Activated CD4-positive, alpha-beta memory T cell treated with anti-CD3 and anti-CD28 coated beads, Interleukin-2, amount 10 ng/mL, durations not matched to agents 7 days and 5 days (primary cell): ENCODE measurements at regions of chr17 and their contacts with region 1.

Region 1: DNA sequence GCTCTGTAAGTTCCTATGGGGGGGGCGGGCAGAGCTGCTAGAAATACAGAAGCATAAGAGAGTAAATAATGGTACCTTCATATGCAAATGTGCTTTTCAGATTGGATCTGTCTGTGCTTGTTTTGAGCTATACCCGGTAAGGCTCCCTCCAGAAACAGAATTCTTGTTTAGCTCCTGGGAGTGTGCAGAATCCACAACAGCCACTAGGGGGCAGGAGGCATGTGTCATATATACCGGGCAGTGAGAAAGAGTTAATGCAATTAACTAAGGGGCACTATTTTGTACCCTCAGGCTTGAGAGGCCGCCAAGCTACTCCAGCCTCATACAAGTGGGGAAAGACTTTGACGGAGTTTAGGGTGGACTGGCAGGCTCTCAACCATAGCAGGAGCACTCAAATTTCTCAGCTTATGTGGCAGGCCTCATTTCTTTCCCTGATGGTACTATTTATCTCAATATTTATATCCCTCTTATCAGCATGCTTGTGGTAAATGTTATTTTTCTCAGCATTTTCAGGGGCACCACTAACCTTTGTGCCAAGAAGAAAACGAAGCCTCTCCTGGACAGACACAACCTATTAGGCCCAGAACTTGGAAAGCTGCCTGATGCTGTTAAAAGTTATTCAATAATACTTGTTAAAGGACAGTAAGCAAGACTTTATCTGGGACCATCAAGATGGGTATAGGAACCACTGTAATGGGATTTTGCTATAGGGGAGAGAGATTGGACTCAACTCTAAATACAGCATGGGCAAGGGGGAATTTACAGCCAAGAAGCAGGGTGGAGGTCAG is 10.7 kb upstream of the CENPV start:
- DNase-seq: peak; percentile 79
- H3K4me3 Mint-ChIP-seq: no peak overlapping the region
- H3K27ac Mint-ChIP-seq: no peak overlapping the region
- H3K4me1 Mint-ChIP-seq: peaks cover 7% of the 10 kb centered on the region
- H3K27me3 Mint-ChIP-seq: peaks cover 5% of the 10 kb centered on the region

Region 2: DNA sequence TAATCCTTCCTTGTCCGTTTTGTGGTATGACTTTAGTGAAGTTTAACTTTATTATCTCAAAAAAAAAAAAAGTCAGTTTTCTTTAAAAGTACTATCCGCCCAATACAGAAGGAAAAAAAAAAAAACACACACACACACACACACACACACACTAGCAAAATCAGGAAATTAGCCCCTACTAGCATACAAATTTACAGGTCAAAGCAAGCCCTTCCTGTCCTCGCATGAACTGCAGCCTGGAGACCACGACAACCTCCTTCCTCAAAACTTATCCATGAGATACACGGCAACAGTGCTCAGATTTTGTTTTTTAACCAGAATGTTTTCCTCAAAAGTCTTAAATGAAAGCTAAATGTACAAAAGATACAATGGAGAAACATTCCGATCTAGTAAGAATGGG is 164.8 kb before region 1 on chr17:
- CTCF ChIA-PET with region 1: no interaction called
- POLR2A ChIA-PET with region 1: no interaction called
- DNase-seq: no peak
- H3K4me3 Mint-ChIP-seq: no peak overlapping the region
- H3K27ac Mint-ChIP-seq: no peak overlapping the region
- H3K4me1 Mint-ChIP-seq: peaks cover 38% of the 10 kb centered on the region
- H3K27me3 Mint-ChIP-seq: no peaks in the 10 kb centered on the region

Region 3: GRCh38 chr17:16342979-16343378 is 21.0 kb before region 1 on chr17:
- CTCF ChIA-PET with region 1: interaction called, 12 read pairs
- POLR2A ChIA-PET with region 1: no interaction called
- DNase-seq: no peak
- H3K4me3 Mint-ChIP-seq: no peak overlapping the region
- H3K27ac Mint-ChIP-seq: no peak overlapping the region
- H3K4me1 Mint-ChIP-seq: no peaks in the 10 kb centered on the region
- H3K27me3 Mint-ChIP-seq: no peaks in the 10 kb centered on the region

Region 4: GRCh38 chr17:16380640-16381495 is 16.9 kb after region 1 on chr17 and contains the start of gene UBB:
- CTCF ChIA-PET with region 1: interaction called, 25 read pairs
- POLR2A ChIA-PET with region 1: interaction called, 19 read pairs
- DNase-seq: peak; percentile 96
- H3K4me3 Mint-ChIP-seq: peak within 1 kb of the TSS; percentile 88
- H3K27ac Mint-ChIP-seq: peak within 1 kb of the TSS; percentile 87
- H3K4me1 Mint-ChIP-seq: peaks cover 34% of the 10 kb centered on the region
- H3K27me3 Mint-ChIP-seq: peaks cover 2% of the 10 kb centered on the region
- total RNA-seq, gene UBB: 1,185 TPM

Region 5: DNA sequence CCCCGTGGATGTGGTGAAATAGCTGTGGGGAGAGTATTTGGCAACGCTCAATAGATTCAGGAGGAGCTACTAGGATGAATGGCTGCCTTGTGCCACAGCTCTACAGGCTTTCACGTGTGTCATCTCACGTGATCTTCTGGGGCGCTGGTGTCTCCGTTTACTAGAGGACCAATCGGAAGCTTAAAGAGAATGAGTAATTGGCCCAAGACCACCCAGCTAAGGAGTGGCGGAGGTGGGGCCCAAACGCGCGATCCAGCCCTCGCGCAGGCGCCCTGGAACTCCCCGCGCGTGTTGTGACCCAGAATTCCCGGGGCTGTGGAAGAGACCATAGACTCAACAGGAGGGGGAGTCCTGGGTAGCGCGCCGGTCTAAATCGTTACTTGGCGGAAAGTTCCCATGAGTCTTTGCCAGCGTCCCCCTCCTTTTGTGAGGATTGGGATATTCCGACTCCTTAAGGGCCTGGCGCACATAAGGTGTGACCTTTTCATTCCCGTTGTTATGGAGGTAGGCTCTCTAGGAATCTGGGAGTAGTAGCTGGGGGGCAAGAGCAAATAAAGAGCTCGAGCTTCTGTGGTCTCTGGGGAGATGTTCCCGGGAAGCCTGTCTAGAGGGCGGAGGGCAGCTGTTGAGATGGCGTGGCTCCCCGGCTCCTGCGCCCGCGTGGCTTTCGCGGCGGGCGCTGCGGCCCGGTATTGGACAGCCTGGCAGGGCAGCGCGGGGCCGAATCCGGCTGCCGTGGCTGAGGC is 74.8 kb after region 1 on chr17:
- CTCF ChIA-PET with region 1: interaction called, 11 read pairs
- POLR2A ChIA-PET with region 1: interaction called, 3 read pairs
- DNase-seq: peak; percentile 95
- H3K4me3 Mint-ChIP-seq: peak overlapping the region; percentile 98
- H3K27ac Mint-ChIP-seq: peak overlapping the region; percentile 97
- H3K4me1 Mint-ChIP-seq: peaks cover 47% of the 10 kb centered on the region
- H3K27me3 Mint-ChIP-seq: no peaks in the 10 kb centered on the region

Region 6: DNA sequence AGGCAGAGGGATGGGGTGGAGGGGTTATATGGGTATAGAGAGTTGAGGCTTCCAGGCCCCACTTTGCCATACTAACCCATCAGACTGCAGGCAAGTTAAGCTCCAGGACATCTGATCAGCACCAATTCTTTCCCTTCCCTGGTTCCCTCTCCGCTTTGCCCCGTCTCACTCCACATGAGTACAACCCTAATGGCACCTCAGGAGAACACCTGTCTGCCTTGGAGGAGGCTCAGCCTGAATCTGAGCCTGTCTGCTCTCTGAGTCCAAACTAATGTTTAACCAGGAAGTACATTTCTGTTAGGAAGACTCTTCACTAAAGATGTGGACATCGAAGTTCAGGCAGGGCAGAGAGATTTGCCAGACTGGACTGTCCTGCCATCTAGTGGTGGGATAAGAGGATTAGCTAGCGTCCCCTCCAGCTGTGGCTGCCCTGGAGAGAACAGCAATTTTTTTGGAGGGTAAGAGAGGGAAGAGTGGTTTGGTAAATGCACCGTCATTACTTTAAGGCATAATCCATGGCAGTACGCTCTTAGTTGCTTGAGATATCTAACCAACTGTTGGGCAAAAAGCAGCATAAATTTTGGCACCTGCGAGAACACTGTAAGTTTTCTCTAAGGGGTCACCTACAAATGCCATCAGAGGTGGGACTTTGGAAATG is 157.3 kb after region 1 on chr17:
- CTCF ChIA-PET with region 1: interaction called, 63 read pairs
- POLR2A ChIA-PET with region 1: no interaction called
- DNase-seq: peak; percentile 69
- H3K4me3 Mint-ChIP-seq: no peak overlapping the region
- H3K27ac Mint-ChIP-seq: no peak overlapping the region
- H3K4me1 Mint-ChIP-seq: peaks cover 4% of the 10 kb centered on the region
- H3K27me3 Mint-ChIP-seq: peaks cover 29% of the 10 kb centered on the region